ENCODE measurements at regions of chr12 and their contacts with region 1.

Region 1: GRCh38 chr12:71183018-71183417 is 25.2 kb upstream of the TSPAN8 start:
- DNase-seq: no peak
- ATAC-seq: no peak
- H3K4me3 ChIP-seq: no peak overlapping the region
- H3K27ac ChIP-seq: no peak overlapping the region
- H3K4me1 ChIP-seq: no peaks in the 10 kb centered on the region
- H3K27me3 ChIP-seq: no peaks in the 10 kb centered on the region
- CTCF ChIP-seq: no peak

Region 2: GRCh38 chr12:71170456-71170855 is 12.6 kb before region 1 on chr12:
- intact Hi-C with region 1: loop called in 1 of 2 experiments (anchors 2 kb)
- DNase-seq: no peak
- ATAC-seq: no peak
- H3K4me3 ChIP-seq: no peak overlapping the region
- H3K27ac ChIP-seq: no peak overlapping the region
- H3K4me1 ChIP-seq: no peaks in the 10 kb centered on the region
- H3K27me3 ChIP-seq: no peaks in the 10 kb centered on the region
- CTCF ChIP-seq: no peak

Region 3: DNA sequence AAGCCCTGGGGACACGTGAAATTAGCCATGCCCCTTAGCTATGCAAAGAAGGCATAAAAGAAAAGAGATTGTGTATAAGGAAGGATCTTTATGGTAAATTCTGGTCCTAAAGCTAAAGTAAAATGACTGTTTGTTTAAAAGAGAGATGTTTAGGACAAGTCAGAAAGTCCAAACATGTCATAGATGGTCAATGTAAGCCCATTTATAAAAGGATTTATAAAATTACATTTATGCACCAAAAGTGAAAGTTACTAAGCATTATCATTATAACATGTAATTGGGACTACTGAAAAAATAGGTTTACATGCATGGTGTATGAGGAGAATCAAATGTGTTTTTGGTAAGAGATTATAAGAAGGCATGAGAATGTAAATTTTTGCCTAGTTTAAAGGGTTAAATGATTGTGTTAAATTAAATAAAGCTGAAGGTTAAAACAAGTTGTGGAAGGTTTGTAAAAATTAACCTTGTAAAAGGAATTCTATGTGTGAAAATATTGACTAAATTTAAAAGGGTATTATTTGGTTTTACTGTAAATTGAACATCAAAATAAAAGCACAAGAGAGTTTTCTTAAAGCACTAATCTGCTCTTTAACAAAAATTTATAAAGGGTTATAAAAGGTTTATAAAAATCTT is 25.2 kb after region 1 on chr12:
- intact Hi-C with region 1: no loop called
- DNase-seq: no peak
- ATAC-seq: no peak
- H3K4me3 ChIP-seq: no peak overlapping the region
- H3K27ac ChIP-seq: no peak overlapping the region
- H3K4me1 ChIP-seq: no peaks in the 10 kb centered on the region
- H3K27me3 ChIP-seq: no peaks in the 10 kb centered on the region
- CTCF ChIP-seq: no peak

Measured in psoas muscle (tissue), 8 donors.